A549 (cell line): ENCODE measurements at regions of chr1 and their contacts with region 1.

Region 1: GRCh38 chr1:204565617-204566582 is 49.7 kb downstream of the MDM4 start:
- DNase-seq: peak; percentile 82 to 89
- ATAC-seq: peak; percentile 79 to 93
- H3K4me3 ChIP-seq: no peak overlapping the region
- H3K27ac ChIP-seq: no peak overlapping the region
- H3K4me1 ChIP-seq: peaks cover 9% of the 10 kb centered on the region; the same call in 2 of the 3 replicates
- CTCF ChIP-seq: peak; percentile 87
- EP300 ChIP-seq: no peak
- POLR2A ChIP-seq: no peak
- RAD21 ChIP-seq: peak; percentile 93 to 95

Region 2: DNA sequence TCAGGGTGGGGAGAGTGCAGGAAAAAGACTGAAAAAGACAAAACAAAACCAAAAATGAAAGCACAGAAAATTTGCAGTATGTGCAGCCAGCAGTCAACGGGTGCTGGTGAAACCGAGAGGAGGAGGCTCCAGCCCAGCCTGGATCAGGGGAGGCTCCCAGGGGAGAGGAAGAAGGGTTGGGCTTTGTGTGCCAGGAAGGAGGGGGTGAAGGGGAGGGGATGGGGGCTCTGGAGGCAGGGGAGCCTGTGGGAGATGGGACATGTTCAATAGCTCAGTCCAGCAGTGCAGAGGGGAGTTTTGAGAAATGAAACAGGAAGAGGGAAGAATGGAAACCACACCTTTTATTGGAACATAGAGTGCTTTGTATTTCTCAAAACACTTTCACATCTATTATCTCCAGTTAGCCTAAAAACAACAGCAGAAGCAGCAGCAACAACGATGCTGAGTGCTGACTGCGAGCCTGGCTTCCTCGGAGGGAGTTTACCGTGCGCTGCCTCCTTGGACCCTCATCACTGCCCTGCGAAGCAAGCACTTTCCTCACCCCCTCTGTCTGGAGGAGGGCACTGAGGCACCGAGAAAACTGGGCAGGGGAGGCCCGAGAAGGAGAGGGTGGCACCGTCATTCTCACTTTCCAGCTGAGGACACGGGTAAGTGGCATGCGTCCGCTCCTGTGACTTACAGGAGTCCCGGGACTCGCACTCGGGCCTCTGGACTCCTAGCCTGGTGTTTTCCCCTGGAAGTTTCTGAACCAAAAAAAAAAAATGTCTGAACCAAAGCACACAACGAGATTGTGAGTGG is 13.2 kb after region 1 on chr1:
- CTCF ChIA-PET with region 1: interaction called, 30 read pairs
- POLR2A ChIA-PET with region 1: no interaction called
- DNase-seq: no peak
- ATAC-seq: no peak
- H3K4me3 ChIP-seq: no peak overlapping the region
- H3K27ac ChIP-seq: 0 out of 6 replicates have a peak overlapping the region, but pooled peaks of 1 of the 2 experiments have one; percentile 30
- H3K4me1 ChIP-seq: peaks cover 6% of the 10 kb centered on the region
- CTCF ChIP-seq: no peak
- EP300 ChIP-seq: no peak
- POLR2A ChIP-seq: no peak
- RAD21 ChIP-seq: no peak

Region 3: GRCh38 chr1:204607910-204608309 is 42.0 kb after region 1 on chr1:
- CTCF ChIA-PET with region 1: interaction called, 12 read pairs
- POLR2A ChIA-PET with region 1: no interaction called
- DNase-seq: no peak
- ATAC-seq: no peak
- H3K4me3 ChIP-seq: no peak overlapping the region
- H3K27ac ChIP-seq: no peak overlapping the region
- H3K4me1 ChIP-seq: no peaks in the 10 kb centered on the region
- CTCF ChIP-seq: no peak
- EP300 ChIP-seq: no peak
- POLR2A ChIP-seq: no peak
- RAD21 ChIP-seq: no peak

Region 4: DNA sequence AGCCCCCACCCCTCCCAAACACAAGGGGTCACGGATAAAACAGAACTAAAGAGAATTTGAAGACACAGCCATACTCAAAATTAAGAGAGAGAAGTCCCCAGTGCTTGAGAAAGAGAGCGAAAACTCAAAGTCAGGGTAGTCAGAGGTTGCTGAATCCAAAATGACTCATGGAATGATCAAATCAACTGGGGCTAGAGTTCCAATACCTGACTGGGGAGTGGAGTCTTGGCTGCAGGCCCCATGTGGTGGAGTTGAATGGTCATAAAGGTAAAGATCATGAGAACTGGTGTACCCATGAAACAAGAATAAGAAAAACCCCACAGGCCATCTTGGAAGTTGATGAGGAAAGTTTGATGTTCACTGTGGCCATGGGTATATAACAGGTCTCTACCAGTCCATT is 204.1 kb after region 1 on chr1:
- CTCF ChIA-PET with region 1: interaction called, 216 read pairs
- POLR2A ChIA-PET with region 1: no interaction called
- DNase-seq: no peak
- ATAC-seq: no peak
- H3K4me3 ChIP-seq: no peak overlapping the region
- H3K27ac ChIP-seq: no peak overlapping the region
- H3K4me1 ChIP-seq: no peaks in the 10 kb centered on the region
- CTCF ChIP-seq: no peak
- EP300 ChIP-seq: no peak
- POLR2A ChIP-seq: no peak
- RAD21 ChIP-seq: no peak

Region 5: DNA sequence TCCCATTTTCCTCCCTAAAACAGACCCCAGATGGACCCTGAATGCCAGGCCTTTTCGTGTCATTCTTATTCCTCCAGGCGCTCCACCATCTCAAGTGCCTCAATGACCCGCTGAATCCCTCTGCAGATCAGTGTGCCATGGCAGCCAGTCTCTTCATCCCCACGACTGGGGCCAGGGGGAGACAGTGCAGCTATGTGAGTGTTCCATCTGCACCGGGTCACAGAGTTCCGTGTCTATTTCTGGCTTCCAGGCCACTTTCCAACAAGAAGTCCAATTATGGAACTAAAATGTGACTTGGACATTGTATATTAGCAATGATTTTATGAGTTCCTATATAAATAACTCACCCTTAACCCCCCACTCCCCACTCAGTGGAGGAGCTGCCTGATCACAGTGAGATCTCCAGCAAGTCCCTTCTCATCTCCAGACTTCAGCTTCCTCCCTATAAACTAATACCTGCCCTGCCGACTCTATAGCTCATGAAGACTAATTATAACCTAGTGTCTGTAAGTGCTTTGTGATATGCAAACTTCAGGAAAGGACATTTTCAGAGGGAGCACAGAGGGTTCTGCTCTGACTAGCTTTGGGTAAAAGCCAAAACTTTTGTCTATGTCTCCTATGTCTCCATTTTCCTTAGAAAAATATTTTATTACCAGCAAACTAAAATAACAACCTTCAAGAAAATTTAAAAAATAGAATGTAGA is 248.4 kb after region 1 on chr1:
- CTCF ChIA-PET with region 1: interaction called, 591 read pairs
- POLR2A ChIA-PET with region 1: no interaction called
- DNase-seq: no peak
- ATAC-seq: 0 out of 6 replicates have a peak, but pooled peaks of 1 of the 2 experiments have one; percentile 30
- H3K4me3 ChIP-seq: no peak overlapping the region
- H3K27ac ChIP-seq: no peak overlapping the region
- H3K4me1 ChIP-seq: no peaks in the 10 kb centered on the region
- CTCF ChIP-seq: no peak
- EP300 ChIP-seq: no peak
- POLR2A ChIP-seq: no peak
- RAD21 ChIP-seq: no peak